Ascending aorta (tissue), 2 donors: ENCODE measurements at regions of chr9 and their contacts with region 1.

Region 1: GRCh38 chr9:15552636-15553527 is at the start of gene CCDC171:
- DNase-seq: peak; percentile 72 to 95
- H3K4me3 ChIP-seq: peak within 1 kb of the TSS; percentile 74 to 75
- H3K27ac ChIP-seq: peak within 1 kb of the TSS; percentile 78 to 84
- H3K4me1 ChIP-seq: peaks cover 0 to 5% of the 10 kb centered on the region in 2 donors
- H3K27me3 ChIP-seq: no peaks in the 10 kb centered on the region
- CTCF ChIP-seq: peak in 1 of 3 experiments; percentile 7
- total RNA-seq, gene CCDC171: 1.7 TPM

Region 2: GRCh38 chr9:15510789-15511575 is 41.9 kb before region 1 on chr9 and contains the start of gene PSIP1:
- intact Hi-C with region 1: loop called (anchors 1 kb)
- DNase-seq: peak in 1 of 2 donors; percentile 80
- H3K4me3 ChIP-seq: peak within 1 kb of the TSS; percentile 72 to 94
- H3K27ac ChIP-seq: peak within 1 kb of the TSS; percentile 92 to 95
- H3K4me1 ChIP-seq: peaks cover 0 to 4% of the 10 kb centered on the region in 2 donors
- H3K27me3 ChIP-seq: no peaks in the 10 kb centered on the region
- CTCF ChIP-seq: peak in 2 of 3 experiments; percentile 7 to 36
- total RNA-seq, gene PSIP1: 115 TPM

Region 3: DNA sequence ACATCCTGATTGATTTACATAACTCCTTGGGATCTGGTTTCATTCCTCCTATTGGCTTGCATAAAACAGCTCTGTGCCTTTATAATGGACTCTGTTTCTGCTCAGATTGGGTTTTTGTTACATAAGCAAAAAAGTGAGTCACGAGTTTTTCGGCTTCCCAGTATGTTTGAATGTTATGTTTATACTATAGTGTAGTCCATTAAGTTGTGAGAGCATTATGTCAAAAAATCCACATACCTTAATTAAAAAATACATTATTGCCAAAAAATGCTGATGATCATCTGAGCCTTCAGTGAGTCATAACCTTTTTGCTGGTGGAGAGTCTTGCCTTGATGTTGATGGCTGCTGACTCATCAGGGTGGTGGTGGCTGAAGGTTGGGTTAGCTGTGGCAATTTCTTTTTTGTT is 144.6 kb after region 1 on chr9:
- intact Hi-C with region 1: no loop called
- DNase-seq: no peak
- H3K4me3 ChIP-seq: no peak overlapping the region
- H3K27ac ChIP-seq: no peak overlapping the region
- H3K4me1 ChIP-seq: no peaks in the 10 kb centered on the region
- H3K27me3 ChIP-seq: no peaks in the 10 kb centered on the region
- CTCF ChIP-seq: no peak